Heart left ventricle (tissue), 16 donors: ENCODE measurements at regions of chr6 and their contacts with region 1.

Region 1: DNA sequence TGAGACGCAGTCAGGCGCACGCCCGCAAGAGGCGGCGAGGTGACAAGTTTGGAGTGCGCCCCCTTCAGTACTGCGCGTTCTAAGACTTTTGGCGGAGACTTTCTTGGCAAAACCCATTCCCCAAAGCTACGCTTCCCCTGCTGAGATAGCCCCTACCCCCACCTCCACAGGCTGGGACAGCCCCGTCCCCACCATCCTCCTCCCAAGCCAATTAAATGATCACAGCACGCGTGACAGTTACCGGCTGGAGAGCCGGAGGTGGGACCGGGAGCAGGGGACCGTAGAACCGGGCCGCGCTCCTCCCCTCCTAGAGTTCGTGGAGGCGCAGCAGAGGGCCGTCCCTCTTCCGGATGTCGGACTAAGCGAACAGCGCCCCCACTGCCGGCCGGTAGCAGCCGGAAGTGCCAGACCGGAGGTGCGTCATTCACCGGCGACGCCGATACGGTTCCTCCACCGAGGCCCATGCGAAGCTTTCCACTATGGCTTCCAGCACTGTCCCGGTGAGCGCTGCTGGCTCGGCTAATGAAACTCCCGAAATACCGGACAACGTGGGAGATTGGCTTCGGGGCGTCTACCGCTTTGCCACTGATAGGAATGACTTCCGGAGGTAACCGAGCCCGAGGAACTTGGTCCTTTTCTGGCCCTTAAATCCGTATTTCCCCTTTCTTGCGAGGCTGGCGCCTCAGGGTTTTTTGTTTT is at the start of gene TOMM6:
- DNase-seq: peak; percentile 96 to 98 (median 97)
- ATAC-seq: peak; percentile 85 to 93 (median 86)
- H3K4me3 ChIP-seq: peak within 1 kb of the TSS; percentile 43 to 99 (median 88)
- H3K27ac ChIP-seq: peak within 1 kb of the TSS; percentile 83 to 99 (median 94)
- H3K4me1 ChIP-seq: peaks cover 12 to 56% (median 34%) of the 10 kb centered on the region in 12 donors
- H3K27me3 ChIP-seq: no peaks in the 10 kb centered on the region
- CTCF ChIP-seq: peak; percentile 77 to 97 (median 90)
- POLR2A ChIP-seq: peak in 1 of 2 donors; percentile 82
- total RNA-seq, gene TOMM6: 158 to 225 (median 182) TPM

Region 2: DNA sequence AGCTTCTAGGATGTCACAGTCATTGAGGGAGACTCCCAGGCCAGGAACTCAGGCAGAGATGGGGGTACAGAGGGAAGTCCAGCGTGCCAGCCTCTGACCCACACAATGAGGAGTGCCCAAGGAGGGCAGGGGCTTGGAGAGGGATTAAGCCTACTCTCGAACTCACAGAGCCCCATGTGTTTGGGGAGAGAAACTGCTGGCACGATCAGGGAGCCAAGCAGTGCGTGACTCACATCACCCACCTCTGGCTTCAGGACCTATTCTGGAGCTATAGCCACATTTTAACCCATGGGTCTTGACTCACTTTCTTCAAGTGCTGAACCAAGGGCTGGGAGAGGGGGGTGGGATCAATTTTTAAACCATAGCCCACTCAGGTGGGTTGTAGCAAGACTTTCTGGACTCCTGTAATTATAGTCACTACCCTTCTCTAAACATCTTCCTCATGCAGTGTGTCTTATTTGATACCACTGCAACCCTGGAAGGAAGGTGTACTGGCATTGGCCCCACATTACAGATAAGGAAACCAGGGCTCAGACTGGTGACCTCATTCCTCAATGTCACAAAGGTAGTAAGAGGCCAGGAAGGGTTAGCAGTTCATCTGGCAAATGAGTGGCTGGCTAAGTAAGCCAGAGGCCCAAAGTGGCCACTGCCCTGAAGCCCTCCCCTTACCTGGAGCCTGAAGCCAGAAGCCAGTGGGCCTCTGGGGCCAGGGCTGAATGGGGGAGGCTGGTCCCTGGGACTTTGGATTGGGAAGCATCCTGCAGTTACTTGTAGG is 229.1 kb before region 1 on chr6:
- intact Hi-C with region 1: no loop called
- DNase-seq: peak in 1 of 5 donors; percentile 24
- ATAC-seq: no peak
- H3K4me3 ChIP-seq: no peak overlapping the region
- H3K27ac ChIP-seq: no peak overlapping the region
- H3K4me1 ChIP-seq: peaks cover 0 to 28% (median 11%) of the 10 kb centered on the region in 12 donors
- H3K27me3 ChIP-seq: no peaks in the 10 kb centered on the region
- CTCF ChIP-seq: no peak
- POLR2A ChIP-seq: no peak

Region 3: DNA sequence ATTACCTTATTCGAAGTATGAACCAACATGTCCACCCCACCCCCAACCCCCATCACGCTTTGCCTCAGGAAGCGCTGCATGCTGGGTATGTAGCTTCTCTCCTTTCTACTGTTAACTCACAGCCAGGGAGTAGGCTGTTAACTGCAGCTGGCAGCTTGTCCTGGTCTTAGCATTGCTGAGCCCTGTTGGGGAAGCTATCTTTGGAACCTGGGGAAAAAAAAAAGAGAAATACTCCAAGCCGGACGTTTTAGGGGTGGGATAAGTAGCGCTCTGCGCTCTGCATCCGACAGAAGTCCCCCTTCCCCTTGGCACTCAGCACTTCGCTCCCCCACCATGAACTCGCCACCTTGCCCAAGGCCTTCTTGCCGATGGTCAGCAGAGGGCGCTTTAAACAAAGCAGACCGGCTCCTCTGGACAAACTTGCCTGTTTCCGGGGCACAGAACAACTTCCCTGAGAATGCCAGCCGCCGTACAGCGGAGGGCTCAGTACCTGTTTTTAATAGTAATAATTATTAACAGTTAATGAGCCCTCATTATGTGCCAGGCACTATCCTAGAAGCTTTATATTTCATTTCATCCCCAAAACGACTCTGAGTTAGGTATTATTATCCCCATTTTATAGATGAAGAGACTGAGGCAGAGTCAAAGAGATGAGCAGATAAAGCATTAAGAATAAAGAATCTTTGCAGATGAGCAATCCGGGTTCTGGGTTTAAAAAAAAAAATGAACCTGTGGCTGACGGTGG is 184.3 kb before region 1 on chr6:
- intact Hi-C with region 1: no loop called
- DNase-seq: peak; percentile 84 to 88 (median 84)
- ATAC-seq: peak; percentile 62 to 87 (median 81)
- H3K4me3 ChIP-seq: peak overlapping the region in 9 of 12 donors; percentile 2 to 40 (median 17)
- H3K27ac ChIP-seq: peak overlapping the region in 3 of 12 donors; percentile 5 to 52 (median 51)
- H3K4me1 ChIP-seq: peaks cover 0 to 11% (median 3%) of the 10 kb centered on the region in 12 donors
- H3K27me3 ChIP-seq: no peaks in the 10 kb centered on the region
- CTCF ChIP-seq: peak; percentile 77 to 96 (median 90)
- POLR2A ChIP-seq: no peak

Region 4: DNA sequence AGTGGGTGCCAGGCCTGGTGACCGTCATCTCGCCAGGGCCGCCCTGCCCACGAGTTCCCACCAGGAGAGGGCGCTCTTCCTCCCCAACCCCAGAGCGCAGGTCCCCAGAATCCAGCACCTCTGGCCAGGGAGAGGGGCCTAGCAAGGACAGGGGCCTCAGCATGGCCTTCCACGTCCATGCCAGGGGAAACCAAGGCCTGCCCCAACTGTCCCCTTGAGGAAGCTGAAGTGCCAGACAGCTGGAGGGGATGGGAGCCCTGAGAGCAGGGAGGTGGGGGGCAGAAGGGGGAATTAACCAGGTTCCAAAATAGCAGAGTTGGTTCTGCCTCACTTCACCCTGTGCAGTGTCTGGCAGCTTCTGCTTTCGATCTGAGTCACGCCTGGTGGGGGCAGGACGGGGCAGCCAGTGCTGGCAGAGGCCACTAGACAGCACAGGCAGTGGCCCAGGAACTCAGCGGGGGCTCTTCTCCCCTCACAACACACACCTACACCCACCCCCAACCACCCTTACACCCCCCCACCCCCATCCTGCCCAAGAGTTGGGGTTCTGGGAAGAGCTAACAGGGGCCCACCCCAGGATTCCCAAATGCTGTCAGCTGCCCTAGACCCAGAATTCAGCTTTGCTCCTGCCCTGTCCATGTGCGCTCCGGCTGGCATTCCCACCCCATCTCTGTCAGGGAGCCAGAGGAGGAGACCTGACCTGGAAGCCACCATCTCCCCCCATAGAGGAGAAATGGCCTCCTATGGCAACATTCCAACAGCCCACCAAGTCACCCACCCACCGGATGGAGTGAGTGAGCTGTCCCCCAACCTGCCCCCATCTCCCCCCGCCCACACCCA is 81.2 kb before region 1 on chr6:
- intact Hi-C with region 1: loop called in 1 of 10 experiments (anchors 10 kb)
- DNase-seq: peak; percentile 86 to 92 (median 87)
- ATAC-seq: peak; percentile 89 to 91 (median 90)
- H3K4me3 ChIP-seq: peak overlapping the region in 2 of 12 donors; percentile 23 to 44
- H3K27ac ChIP-seq: peak overlapping the region; percentile 64 to 92 (median 82)
- H3K4me1 ChIP-seq: peaks cover 10 to 89% (median 61%) of the 10 kb centered on the region in 12 donors
- H3K27me3 ChIP-seq: no peaks in the 10 kb centered on the region
- CTCF ChIP-seq: peak; percentile 54 to 84 (median 72)
- POLR2A ChIP-seq: peak in 1 of 2 donors; percentile 10

Region 5: GRCh38 chr6:41920921-41921711 is 133.7 kb after region 1 on chr6 and contains the starts of genes BYSL and MED20:
- intact Hi-C with region 1: loop called in 8 of 10 experiments (anchors 1 to 5 kb)
- DNase-seq: peak; percentile 93 to 95 (median 95)
- ATAC-seq: peak; percentile 98 to 99 (median 98)
- H3K4me3 ChIP-seq: peak within 1 kb of the TSS; percentile 64 to 93 (median 83)
- H3K27ac ChIP-seq: peak within 1 kb of the TSS; percentile 95 to 99 (median 98)
- H3K4me1 ChIP-seq: peaks cover 3 to 48% (median 23%) of the 10 kb centered on the region in 12 donors
- H3K27me3 ChIP-seq: no peaks in the 10 kb centered on the region
- CTCF ChIP-seq: peak; percentile 89 to 100 (median 99)
- POLR2A ChIP-seq: peak in 1 of 2 donors; percentile 62
- total RNA-seq, gene BYSL: 4.5 to 15.3 (median 9.2) TPM
- total RNA-seq, gene MED20: 13.5 to 25.5 (median 16.9) TPM

Region 6: GRCh38 chr6:41941280-41942066 is 154.1 kb after region 1 on chr6 and contains the start of gene CCND3:
- intact Hi-C with region 1: loop called in 8 of 10 experiments (anchors 5 kb)
- DNase-seq: peak; percentile 94 to 97 (median 95)
- ATAC-seq: peak; percentile 84 to 95 (median 94)
- H3K4me3 ChIP-seq: peak within 1 kb of the TSS; percentile 63 to 99 (median 88)
- H3K27ac ChIP-seq: peak within 1 kb of the TSS; percentile 54 to 95 (median 86)
- H3K4me1 ChIP-seq: peaks cover 7 to 63% (median 46%) of the 10 kb centered on the region in 12 donors
- H3K27me3 ChIP-seq: no peaks in the 10 kb centered on the region
- CTCF ChIP-seq: peak in 2 of 12 donors; percentile 2 to 11
- POLR2A ChIP-seq: peak in 1 of 2 donors; percentile 70
- total RNA-seq, gene CCND3: 33.9 to 116 (median 46.2) TPM

Region 7: DNA sequence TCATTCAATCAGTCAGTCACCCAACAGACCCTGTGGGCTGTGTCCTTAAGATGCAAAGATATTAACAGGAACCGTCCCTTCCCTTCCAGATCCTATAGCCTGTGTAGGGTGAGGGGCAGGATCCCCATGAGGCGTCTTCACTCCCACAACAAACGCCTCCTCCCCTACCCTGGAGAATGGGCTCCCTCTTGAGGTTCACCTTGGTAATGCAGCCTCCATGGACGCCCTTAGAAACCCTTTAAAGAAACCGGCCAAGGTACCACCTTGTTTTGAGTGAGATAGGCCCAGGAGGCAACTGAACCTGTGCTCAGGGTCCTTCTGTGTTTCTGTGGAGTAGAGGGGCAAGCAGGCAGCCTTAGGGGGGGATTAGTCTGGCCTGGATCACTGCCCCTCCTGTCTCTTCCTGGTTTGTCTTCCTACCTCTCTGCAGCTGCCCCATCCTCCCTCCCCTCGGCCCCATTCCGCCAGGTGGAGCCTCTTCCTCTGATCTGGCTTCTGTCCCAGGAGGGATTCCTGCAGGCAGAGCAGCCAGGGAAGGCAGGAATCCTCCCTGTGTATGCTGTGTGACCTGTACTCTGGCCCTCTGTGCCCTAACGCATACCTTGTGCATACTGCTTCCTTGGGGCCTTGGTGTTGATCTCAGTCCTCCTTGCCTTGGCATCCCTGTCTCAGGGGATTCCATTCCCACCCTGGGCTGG is 379.2 kb after region 1 on chr6:
- intact Hi-C with region 1: loop called in 1 of 10 experiments (anchors 10 kb)
- DNase-seq: peak in 4 of 5 donors; percentile 41 to 60 (median 57)
- ATAC-seq: peak in 3 of 4 donors; percentile 73 to 82 (median 74)
- H3K4me3 ChIP-seq: no peak overlapping the region
- H3K27ac ChIP-seq: no peak overlapping the region
- H3K4me1 ChIP-seq: peaks cover 0 to 4% (median 0%) of the 10 kb centered on the region in 12 donors
- H3K27me3 ChIP-seq: no peaks in the 10 kb centered on the region
- CTCF ChIP-seq: peak; percentile 88 to 95 (median 92)
- POLR2A ChIP-seq: no peak

Region 8: DNA sequence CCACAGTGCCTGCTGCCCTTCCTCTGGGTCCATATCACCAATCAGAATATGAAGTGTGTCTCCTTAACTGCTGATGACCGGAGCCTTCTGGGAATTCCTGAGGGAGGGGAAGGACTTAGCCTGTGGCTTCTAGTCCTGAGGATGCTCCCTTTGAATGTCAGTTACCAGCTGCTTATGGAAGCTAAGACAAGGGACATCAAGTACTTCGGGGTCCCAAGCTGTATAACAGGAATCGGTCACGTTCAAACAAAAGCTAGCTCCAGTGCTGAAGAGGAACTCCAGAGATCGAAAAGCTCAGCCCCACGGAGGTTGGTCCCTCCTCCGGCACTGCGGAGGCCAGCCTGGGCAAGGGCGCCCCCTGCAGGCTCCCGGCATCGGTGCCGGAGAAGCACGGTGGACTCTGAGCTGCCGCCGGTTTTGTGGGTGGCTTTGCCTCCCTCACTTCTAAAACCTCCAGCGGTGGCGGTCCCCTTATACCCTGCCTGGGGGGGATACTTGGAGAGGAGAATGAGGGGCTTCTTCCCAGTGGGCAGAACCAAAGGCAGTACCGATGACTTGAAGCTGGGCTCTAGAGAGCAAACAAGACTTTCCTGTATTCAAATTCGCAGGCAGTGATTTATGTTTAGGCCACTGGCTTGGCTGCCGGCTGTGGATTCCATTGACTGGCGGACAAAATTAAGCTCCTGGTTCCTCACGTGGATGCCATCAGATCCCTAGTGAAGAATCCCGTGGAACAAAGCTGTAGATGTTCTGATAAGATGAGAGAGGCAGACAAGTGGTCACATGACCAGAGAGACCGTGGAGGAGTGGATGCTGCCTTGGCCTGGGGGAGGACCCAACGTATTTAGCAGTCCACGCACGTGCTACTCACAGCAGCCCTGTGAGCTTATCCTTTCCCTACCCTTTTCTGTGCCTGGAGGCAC is 760.3 kb after region 1 on chr6:
- intact Hi-C with region 1: loop called in 1 of 10 experiments (anchors 10 kb)
- DNase-seq: peak; percentile 82 to 92 (median 84)
- ATAC-seq: peak; percentile 94 to 99 (median 99)
- H3K4me3 ChIP-seq: peak overlapping the region; percentile 13 to 76 (median 53)
- H3K27ac ChIP-seq: peak overlapping the region in 9 of 12 donors; percentile 31 to 73 (median 45)
- H3K4me1 ChIP-seq: peaks cover 0 to 14% (median 4%) of the 10 kb centered on the region in 12 donors
- H3K27me3 ChIP-seq: peaks cover 0 to 4% (median 0%) of the 10 kb centered on the region in 9 donors
- CTCF ChIP-seq: peak; percentile 96 to 100 (median 99)
- POLR2A ChIP-seq: peak in 1 of 2 donors; percentile 24